ENCODE measurements at regions of chr3 and their contacts with region 1.

Region 1: GRCh38 chr3:71847794-71848193 is 62.8 kb upstream of the PROK2 start:
- DNase-seq: no peak
- H3K4me3 ChIP-seq: no peak overlapping the region
- H3K4me3 Mint-ChIP-seq: no peak overlapping the region
- H3K27ac ChIP-seq: no peak overlapping the region
- H3K27ac Mint-ChIP-seq: no peak overlapping the region
- H3K4me1 ChIP-seq: no peaks in the 10 kb centered on the region
- H3K4me1 Mint-ChIP-seq: no peaks in the 10 kb centered on the region
- H3K27me3 ChIP-seq: no peaks in the 10 kb centered on the region
- H3K27me3 Mint-ChIP-seq: peaks cover 9 to 18% of the 10 kb centered on the region in 2 donors

Region 2: DNA sequence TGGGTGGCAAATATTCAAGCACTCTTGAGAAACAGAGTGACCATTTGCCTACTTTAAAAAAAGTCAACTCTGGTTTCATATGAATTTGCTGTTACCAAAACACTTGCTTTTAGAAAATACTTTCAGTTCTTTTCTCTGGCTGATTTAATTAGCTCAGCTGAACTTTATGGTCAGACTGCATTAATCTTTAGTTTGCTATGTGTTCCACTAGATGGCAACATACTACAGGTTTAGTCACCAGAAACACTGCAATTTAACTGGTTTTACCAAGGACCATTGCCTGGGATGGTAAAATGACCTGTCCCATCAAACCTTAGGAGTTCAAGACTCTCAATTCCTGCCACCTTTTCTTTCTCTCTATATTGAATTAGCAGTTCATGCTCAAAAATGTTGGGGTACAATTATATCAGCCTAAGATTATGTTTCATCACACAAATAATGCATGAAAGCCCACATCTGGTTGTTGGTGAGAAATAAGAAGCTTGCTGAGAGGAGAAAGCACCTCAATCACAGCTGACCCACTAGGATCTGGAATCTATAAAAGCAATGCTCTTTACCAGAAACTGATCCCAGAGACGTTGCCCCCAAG is 136.8 kb before region 1 on chr3:
- CTCF ChIA-PET with region 1: no interaction called
- POLR2A ChIA-PET with region 1: no interaction called
- intact Hi-C with region 1: no loop called
- DNase-seq: peak in 4 of 5 donors; percentile 50 to 59 (median 56)
- H3K4me3 ChIP-seq: no peak overlapping the region
- H3K4me3 Mint-ChIP-seq: peak overlapping the region in 3 of 8 donors; percentile 25 to 47 (median 25)
- H3K27ac ChIP-seq: no peak overlapping the region
- H3K27ac Mint-ChIP-seq: peak overlapping the region in 3 of 7 donors; percentile 80 to 83 (median 81)
- H3K4me1 ChIP-seq: peaks cover 87% of the 10 kb centered on the region
- H3K4me1 Mint-ChIP-seq: peaks cover 66 to 92% (median 74%) of the 10 kb centered on the region in 4 donors
- H3K27me3 ChIP-seq: no peaks in the 10 kb centered on the region
- H3K27me3 Mint-ChIP-seq: no peaks in the 10 kb centered on the region

Region 3: GRCh38 chr3:71859123-71859519 is 11.3 kb after region 1 on chr3:
- CTCF ChIA-PET with region 1: interaction called, 10 read pairs
- POLR2A ChIA-PET with region 1: no interaction called
- intact Hi-C with region 1: no loop called
- DNase-seq: peak; percentile 33 to 68 (median 64)
- H3K4me3 ChIP-seq: no peak overlapping the region
- H3K4me3 Mint-ChIP-seq: peak overlapping the region in 1 of 8 donors; percentile 21
- H3K27ac ChIP-seq: no peak overlapping the region
- H3K27ac Mint-ChIP-seq: peak overlapping the region in 1 of 7 donors; percentile 33
- H3K4me1 ChIP-seq: peaks cover 7% of the 10 kb centered on the region
- H3K4me1 Mint-ChIP-seq: peaks cover 5 to 11% (median 7%) of the 10 kb centered on the region in 4 donors
- H3K27me3 ChIP-seq: no peaks in the 10 kb centered on the region
- H3K27me3 Mint-ChIP-seq: peaks cover 17 to 26% of the 10 kb centered on the region in 2 donors

Measured in CD4-positive, alpha-beta memory T cell (primary cell).